ENCODE measurements at regions of chr16 and their contacts with region 1.

Region 1: GRCh38 chr16:70454222-70455034 is at the start of gene FCSK:
- DNase-seq: peak; percentile 88
- ATAC-seq: peak; percentile 87
- total RNA-seq, gene FCSK: 7.5 TPM

Region 2: GRCh38 chr16:70380861-70381603 is 73.4 kb before region 1 on chr16:
- intact Hi-C with region 1: loop called (anchors 1 kb)
- DNase-seq: peak; percentile 96
- ATAC-seq: peak; percentile 97

Region 3: GRCh38 chr16:70438969-70439862 is 15.2 kb before region 1 on chr16 and contains the start of gene ST3GAL2:
- intact Hi-C with region 1: loop called (anchors 2 kb)
- DNase-seq: peak; percentile 98
- ATAC-seq: peak; percentile 98
- total RNA-seq, gene ST3GAL2: 25.6 TPM